ENCODE measurements at regions of chr17 and their contacts with region 1.

Region 1: GRCh38 chr17:49315551-49316257 is 46.3 kb downstream of the ZNF652 start:
- DNase-seq: peak; percentile 74 to 93
- H3K4me3 ChIP-seq: no peak overlapping the region
- CTCF ChIP-seq: no peak
- POLR2A ChIP-seq: no peak

Region 2: GRCh38 chr17:49390548-49391324 is 75.0 kb after region 1 on chr17:
- intact Hi-C with region 1: loop called (anchors 5 kb)
- DNase-seq: peak; percentile 32 to 87
- H3K4me3 ChIP-seq: no peak overlapping the region
- CTCF ChIP-seq: no peak
- POLR2A ChIP-seq: no peak

Region 3: DNA sequence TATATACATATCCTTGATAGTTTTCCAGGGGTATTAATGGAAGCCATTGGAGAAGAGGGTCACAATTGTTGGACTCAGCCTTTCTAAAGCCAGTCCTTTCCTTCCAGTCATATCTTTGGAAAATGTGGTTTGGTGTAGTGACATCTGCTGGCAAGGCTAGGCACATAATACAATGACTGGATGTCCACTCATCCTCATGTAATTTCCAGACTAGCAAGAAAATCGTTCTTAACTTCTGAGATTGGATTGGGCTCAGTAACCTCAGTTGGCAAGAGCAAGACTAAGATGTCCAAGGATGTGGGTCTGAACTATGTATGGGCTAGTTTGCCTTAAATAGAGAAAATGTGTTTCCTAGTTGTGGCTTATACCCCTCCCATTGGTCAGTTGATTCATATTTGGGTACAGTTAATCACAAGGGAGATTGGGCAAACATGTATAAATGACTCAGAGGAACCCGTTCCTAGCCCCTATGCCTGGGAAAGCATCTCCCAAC is 464.1 kb after region 1 on chr17:
- intact Hi-C with region 1: no loop called
- DNase-seq: no peak
- H3K4me3 ChIP-seq: no peak overlapping the region
- CTCF ChIP-seq: no peak
- POLR2A ChIP-seq: no peak

Measured in lower leg skin (tissue), 4 donors.